BJ (cell line): ENCODE measurements at regions of chr2 and their contacts with region 1.

Region 1: DNA sequence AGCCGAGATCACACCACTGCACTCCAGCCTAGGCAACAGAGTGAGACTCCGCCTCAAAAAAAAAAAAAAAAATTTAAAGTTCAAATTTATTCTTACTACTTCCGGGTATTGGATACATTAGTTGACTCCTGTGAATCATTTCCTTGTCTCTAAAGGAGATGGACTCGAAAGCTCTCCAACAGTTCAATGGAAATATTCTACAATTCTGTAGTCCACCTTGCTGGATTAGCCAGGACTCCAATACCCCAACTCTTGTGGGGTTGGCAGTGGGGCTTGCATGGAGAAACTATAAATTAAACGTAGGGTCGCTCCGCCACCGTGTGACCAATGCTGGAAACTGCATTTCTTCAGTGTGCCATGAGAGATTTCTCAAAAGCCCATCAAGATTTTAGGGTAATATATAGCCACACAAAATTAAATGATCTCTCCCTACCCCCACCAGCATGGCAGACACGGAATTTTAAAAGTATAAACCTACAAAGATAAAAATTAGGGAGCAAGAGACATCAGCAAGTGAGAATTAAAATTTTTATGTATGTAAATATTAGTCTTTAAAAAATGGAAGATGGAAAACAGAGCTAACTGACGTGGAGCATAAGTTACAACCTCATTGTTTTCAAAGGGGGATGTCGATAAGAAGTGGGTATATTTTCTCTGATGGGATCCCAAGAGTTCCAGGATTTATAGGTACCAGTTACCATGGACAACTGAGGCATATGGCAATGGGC is 27.8 kb upstream of the GAREM2 start:
- DNase-seq: no peak
- H3K4me3 ChIP-seq: no peak overlapping the region
- H3K27me3 ChIP-seq: no peaks in the 10 kb centered on the region; the same call in 1 of the 2 replicates
- CTCF ChIP-seq: peak; percentile 78

Region 2: GRCh38 chr2:25951071-25951547 is 194.0 kb before region 1 on chr2:
- CTCF ChIA-PET with region 1: interaction called, 25 read pairs
- POLR2A ChIA-PET with region 1: interaction called, 3 read pairs
- DNase-seq: peak; percentile 21
- H3K4me3 ChIP-seq: no peak overlapping the region
- H3K27me3 ChIP-seq: no peaks in the 10 kb centered on the region
- CTCF ChIP-seq: peak; percentile 94

Region 3: GRCh38 chr2:25991965-25992364 is 153.2 kb before region 1 on chr2:
- CTCF ChIA-PET with region 1: interaction called, 23 read pairs
- POLR2A ChIA-PET with region 1: interaction called, 6 read pairs
- DNase-seq: no peak
- H3K4me3 ChIP-seq: no peak overlapping the region
- H3K27me3 ChIP-seq: no peaks in the 10 kb centered on the region
- CTCF ChIP-seq: no peak

Region 4: DNA sequence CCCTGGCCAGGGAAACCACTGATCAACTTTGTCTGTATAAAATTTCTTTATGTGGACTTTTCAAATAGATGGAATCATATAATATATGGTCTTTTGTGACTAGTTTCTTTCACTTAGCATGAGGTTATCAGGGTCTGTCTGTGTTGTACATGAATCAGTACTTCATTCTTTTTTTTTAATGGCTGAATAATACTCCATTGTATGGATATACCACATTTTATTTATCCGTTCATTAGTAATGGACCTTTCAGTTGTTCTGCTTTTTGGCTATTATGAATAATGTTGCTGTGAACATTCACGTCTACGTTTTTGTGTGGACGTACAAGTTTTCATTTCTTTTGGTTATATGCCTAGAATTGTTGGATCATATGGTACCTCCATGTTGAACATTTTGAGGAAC is 41.4 kb before region 1 on chr2:
- CTCF ChIA-PET with region 1: no interaction called
- POLR2A ChIA-PET with region 1: no interaction called
- DNase-seq: no peak
- H3K4me3 ChIP-seq: no peak overlapping the region
- H3K27me3 ChIP-seq: no peaks in the 10 kb centered on the region
- CTCF ChIP-seq: no peak